ENCODE measurements at regions of chr2 and their contacts with region 1.

Region 1: GRCh38 chr2:161625314-161625919 is 1.2 kb downstream of the SLC4A10 start:
- DNase-seq: no peak
- H3K4me3 ChIP-seq: no peak overlapping the region
- H3K27ac ChIP-seq: no peak overlapping the region
- H3K4me1 ChIP-seq: no peaks in the 10 kb centered on the region
- H3K27me3 ChIP-seq: peaks cover 26% of the 10 kb centered on the region
- CTCF ChIP-seq: no peak

Region 2: GRCh38 chr2:161676902-161677496 is 51.6 kb after region 1 on chr2:
- CTCF ChIA-PET with region 1: no interaction called
- dilution Hi-C with region 1: no loop called
- in situ Hi-C with region 1: no loop called
- intact Hi-C with region 1: loop called (anchors 5 kb)
- DNase-seq: no peak
- H3K4me3 ChIP-seq: no peak overlapping the region
- H3K27ac ChIP-seq: no peak overlapping the region
- H3K4me1 ChIP-seq: no peaks in the 10 kb centered on the region
- H3K27me3 ChIP-seq: peaks cover 2% of the 10 kb centered on the region
- CTCF ChIP-seq: no peak

Measured in mammary epithelial cell (primary cell).